ENCODE measurements at regions of chr11 and their contacts with region 1.

Region 1: GRCh38 chr11:30333405-30333804 is 10.5 kb downstream of the ARL14EP start:
- DNase-seq: no peak
- H3K4me3 ChIP-seq: no peak overlapping the region
- H3K27ac ChIP-seq: no peak overlapping the region
- H3K4me1 ChIP-seq: no peaks in the 10 kb centered on the region
- H3K27me3 ChIP-seq: peaks cover 0 to 3% (median 0%) of the 10 kb centered on the region in 4 experiments; a peak in 1 of 7 replicates
- CTCF ChIP-seq: peak in 2 of 3 experiments; percentile 39 to 58; a peak in 3 of 4 replicates
- EP300 ChIP-seq: no peak
- POLR2A ChIP-seq: no peak
- RAD21 ChIP-seq: peak; percentile 61 to 67

Region 2: GRCh38 chr11:30322826-30323710 is 10.3 kb before region 1 on chr11 and contains the start of gene ARL14EP:
- CTCF ChIA-PET with region 1: interaction called, 10 read pairs
- POLR2A ChIA-PET with region 1: interaction called, 14 read pairs
- DNase-seq: peak; percentile 88 to 91
- H3K4me3 ChIP-seq: peak within 1 kb of the TSS; percentile 80 to 95 (median 83)
- H3K27ac ChIP-seq: peak within 1 kb of the TSS; percentile 97
- H3K4me1 ChIP-seq: peaks cover 0 to 2% (median 1%) of the 10 kb centered on the region in 4 experiments; a peak in 2 of 7 replicates
- H3K27me3 ChIP-seq: no peaks in the 10 kb centered on the region; a peak in 1 of 7 replicates
- CTCF ChIP-seq: no peak
- EP300 ChIP-seq: no peak
- POLR2A ChIP-seq: peak; percentile 97 to 99
- RAD21 ChIP-seq: no peak
- total RNA-seq, gene ARL14EP: 29.6 and 32.6 TPM in 2 replicates

Region 3: GRCh38 chr11:30346068-30346688 is 12.8 kb after region 1 on chr11:
- CTCF ChIA-PET with region 1: interaction called, 15 read pairs
- POLR2A ChIA-PET with region 1: no interaction called
- DNase-seq: no peak
- H3K4me3 ChIP-seq: no peak overlapping the region
- H3K27ac ChIP-seq: no peak overlapping the region
- H3K4me1 ChIP-seq: no peaks in the 10 kb centered on the region
- H3K27me3 ChIP-seq: no peaks in the 10 kb centered on the region
- CTCF ChIP-seq: peak in 2 of 3 experiments; percentile 30 to 49; a peak in 2 of 4 replicates
- EP300 ChIP-seq: no peak
- POLR2A ChIP-seq: no peak
- RAD21 ChIP-seq: peak; percentile 78 to 85

Region 4: GRCh38 chr11:30365793-30366517 is 32.5 kb after region 1 on chr11:
- CTCF ChIA-PET with region 1: no interaction called
- POLR2A ChIA-PET with region 1: no interaction called
- DNase-seq: no peak
- H3K4me3 ChIP-seq: no peak overlapping the region
- H3K27ac ChIP-seq: no peak overlapping the region
- H3K4me1 ChIP-seq: peaks cover 0 to 4% (median 2%) of the 10 kb centered on the region in 4 experiments; a peak in 2 of 7 replicates
- H3K27me3 ChIP-seq: no peaks in the 10 kb centered on the region
- CTCF ChIP-seq: no peak
- EP300 ChIP-seq: no peak
- POLR2A ChIP-seq: no peak
- RAD21 ChIP-seq: no peak

Measured in H1 (cell line).